Activated naive CD4-positive, alpha-beta T cell treated with anti-CD3 and anti-CD28 coated beads for 36 hours (primary cell): ENCODE measurements at regions of chr3 and their contacts with region 1.

Region 1: DNA sequence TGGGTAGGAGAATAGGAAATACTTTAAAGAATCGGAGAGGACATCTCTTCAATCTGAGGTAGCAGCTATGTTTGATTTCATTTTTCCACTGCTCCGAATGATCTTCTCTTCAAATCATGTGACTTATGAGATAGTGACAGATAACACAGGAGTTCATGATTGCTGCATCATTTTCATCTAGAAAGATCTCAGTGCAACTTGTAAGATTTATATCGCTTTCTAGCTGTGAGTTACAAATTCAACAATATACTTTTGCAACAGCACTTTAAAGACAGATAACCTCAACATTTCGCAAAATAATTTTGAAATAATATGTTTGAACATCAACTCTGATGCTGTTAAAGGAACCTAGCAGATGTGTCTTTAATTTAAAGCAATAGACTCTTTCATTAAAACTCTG is 99.9 kb upstream of the CCDC80 start:
- DNase-seq: no peak
- H3K4me3 Mint-ChIP-seq: no peak overlapping the region
- H3K27ac Mint-ChIP-seq: no peak overlapping the region
- H3K4me1 Mint-ChIP-seq: peaks cover 61% of the 10 kb centered on the region
- H3K27me3 Mint-ChIP-seq: no peaks in the 10 kb centered on the region

Region 2: DNA sequence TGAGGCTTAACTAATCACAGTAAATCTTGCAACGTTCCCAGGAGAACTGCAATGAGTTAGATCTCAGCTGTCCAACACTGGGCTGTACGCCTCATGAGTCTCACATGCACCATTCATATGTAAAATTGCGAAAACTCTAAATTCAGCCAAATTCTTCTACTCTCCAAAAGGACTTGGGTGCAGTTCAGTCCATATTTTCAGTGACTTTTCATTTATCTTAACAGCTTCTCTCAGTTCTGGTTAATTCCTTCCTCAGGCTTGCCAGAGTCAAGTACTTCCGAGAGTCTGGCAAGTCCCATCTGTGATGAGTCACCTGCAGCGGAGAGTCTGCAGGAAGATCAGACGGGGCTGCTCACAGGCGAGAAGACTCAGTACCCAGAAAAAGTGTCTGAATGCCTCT is 111.4 kb before region 1 on chr3:
- CTCF ChIA-PET with region 1: no interaction called
- intact Hi-C with region 1: no loop called
- DNase-seq: peak; percentile 52
- H3K4me3 Mint-ChIP-seq: no peak overlapping the region
- H3K27ac Mint-ChIP-seq: no peak overlapping the region
- H3K4me1 Mint-ChIP-seq: peaks cover 6% of the 10 kb centered on the region
- H3K27me3 Mint-ChIP-seq: peaks cover 3% of the 10 kb centered on the region

Region 3: GRCh38 chr3:112770032-112770626 is 29.3 kb after region 1 on chr3:
- CTCF ChIA-PET with region 1: no interaction called
- intact Hi-C with region 1: loop called (anchors 2 kb)
- DNase-seq: peak; percentile 57
- H3K4me3 Mint-ChIP-seq: no peak overlapping the region
- H3K27ac Mint-ChIP-seq: no peak overlapping the region
- H3K4me1 Mint-ChIP-seq: peaks cover 19% of the 10 kb centered on the region
- H3K27me3 Mint-ChIP-seq: no peaks in the 10 kb centered on the region

Region 4: GRCh38 chr3:112832735-112833134 is 91.9 kb after region 1 on chr3:
- CTCF ChIA-PET with region 1: no interaction called
- intact Hi-C with region 1: no loop called
- DNase-seq: no peak
- H3K4me3 Mint-ChIP-seq: no peak overlapping the region
- H3K27ac Mint-ChIP-seq: no peak overlapping the region
- H3K4me1 Mint-ChIP-seq: no peaks in the 10 kb centered on the region
- H3K27me3 Mint-ChIP-seq: no peaks in the 10 kb centered on the region